Activated T-helper 1 cell treated with anti-CD3 and anti-CD28 coated beads, Interleukin-12 subunit alpha, Interleukin-12 subunit beta, Interleukin-2, Interleukin-4 antibody, amounts not matched to agents 30 ng/mL and 10 ng/mL and 1 ng/mL, durations not matched to agents 14 hours and 24 hours and 36 hours (primary cell): ENCODE measurements at regions of chr12 and their contacts with region 1.

Region 1: DNA sequence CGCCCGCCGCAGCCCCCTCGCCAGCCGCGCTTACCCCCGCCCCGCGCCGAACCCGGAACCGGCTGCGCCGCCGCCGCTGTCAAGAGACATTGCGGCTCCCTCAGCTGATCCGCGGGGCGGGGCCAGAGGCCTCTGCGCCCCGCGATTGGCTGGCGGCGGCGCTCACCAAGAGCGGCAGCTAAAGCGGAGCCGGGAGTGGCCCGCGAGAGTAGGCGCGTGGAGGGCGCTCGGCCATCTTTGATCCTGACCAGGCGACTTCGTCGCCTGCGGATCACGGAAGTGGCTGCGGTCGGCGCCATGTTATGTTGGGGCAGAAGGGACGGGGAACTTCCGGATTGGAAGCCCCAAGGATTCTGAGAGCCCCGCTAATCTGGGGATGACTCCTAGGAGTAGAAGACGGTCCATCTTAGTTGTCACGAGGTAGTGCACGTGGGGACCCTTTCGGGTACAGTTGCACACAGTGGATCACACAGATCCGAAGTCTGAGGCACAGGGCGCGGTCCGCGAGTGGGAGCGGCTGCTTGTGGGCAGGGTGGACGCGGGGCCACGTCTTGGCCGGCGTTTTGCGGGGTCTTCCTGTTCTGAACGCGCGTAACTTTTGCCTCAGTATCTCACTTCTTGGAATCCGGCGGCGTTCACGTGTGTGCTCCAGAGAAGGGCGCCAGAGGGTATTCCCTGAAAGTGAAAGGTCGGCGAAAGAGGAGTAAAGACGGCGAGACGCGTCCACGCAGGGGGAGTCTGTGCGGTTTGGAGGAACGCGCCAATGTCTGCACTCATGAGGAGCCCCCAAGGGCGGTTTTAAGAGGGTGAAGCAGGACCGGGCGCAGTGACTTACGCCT is at the start of gene CHFR:
- DNase-seq: peak; percentile 93
- H3K4me3 Mint-ChIP-seq: peak within 1 kb of the TSS; percentile 99
- H3K27ac Mint-ChIP-seq: peak within 1 kb of the TSS; percentile 100
- H3K4me1 Mint-ChIP-seq: peaks cover 15% of the 10 kb centered on the region
- H3K27me3 Mint-ChIP-seq: peaks cover 2% of the 10 kb centered on the region
- total RNA-seq, gene CHFR: 63.7 and 65.6 TPM in 2 replicates

Region 2: GRCh38 chr12:132189378-132190011 is 698.2 kb before region 1 on chr12:
- intact Hi-C with region 1: loop called (anchors 10 kb)
- DNase-seq: peak; percentile 95
- H3K4me3 Mint-ChIP-seq: peak overlapping the region; percentile 93
- H3K27ac Mint-ChIP-seq: peak overlapping the region; percentile 87
- H3K4me1 Mint-ChIP-seq: peaks cover 31% of the 10 kb centered on the region
- H3K27me3 Mint-ChIP-seq: peaks cover 5% of the 10 kb centered on the region

Region 3: GRCh38 chr12:132710422-132711168 is 177.1 kb before region 1 on chr12 and contains the start of gene PGAM5:
- intact Hi-C with region 1: loop called (anchors 1 kb)
- DNase-seq: peak; percentile 94
- H3K4me3 Mint-ChIP-seq: peak within 1 kb of the TSS; percentile 92
- H3K27ac Mint-ChIP-seq: peak within 1 kb of the TSS; percentile 96
- H3K4me1 Mint-ChIP-seq: peaks cover 15% of the 10 kb centered on the region
- H3K27me3 Mint-ChIP-seq: no peaks in the 10 kb centered on the region
- total RNA-seq, gene PGAM5: 107 and 111 TPM in 2 replicates

Region 4: DNA sequence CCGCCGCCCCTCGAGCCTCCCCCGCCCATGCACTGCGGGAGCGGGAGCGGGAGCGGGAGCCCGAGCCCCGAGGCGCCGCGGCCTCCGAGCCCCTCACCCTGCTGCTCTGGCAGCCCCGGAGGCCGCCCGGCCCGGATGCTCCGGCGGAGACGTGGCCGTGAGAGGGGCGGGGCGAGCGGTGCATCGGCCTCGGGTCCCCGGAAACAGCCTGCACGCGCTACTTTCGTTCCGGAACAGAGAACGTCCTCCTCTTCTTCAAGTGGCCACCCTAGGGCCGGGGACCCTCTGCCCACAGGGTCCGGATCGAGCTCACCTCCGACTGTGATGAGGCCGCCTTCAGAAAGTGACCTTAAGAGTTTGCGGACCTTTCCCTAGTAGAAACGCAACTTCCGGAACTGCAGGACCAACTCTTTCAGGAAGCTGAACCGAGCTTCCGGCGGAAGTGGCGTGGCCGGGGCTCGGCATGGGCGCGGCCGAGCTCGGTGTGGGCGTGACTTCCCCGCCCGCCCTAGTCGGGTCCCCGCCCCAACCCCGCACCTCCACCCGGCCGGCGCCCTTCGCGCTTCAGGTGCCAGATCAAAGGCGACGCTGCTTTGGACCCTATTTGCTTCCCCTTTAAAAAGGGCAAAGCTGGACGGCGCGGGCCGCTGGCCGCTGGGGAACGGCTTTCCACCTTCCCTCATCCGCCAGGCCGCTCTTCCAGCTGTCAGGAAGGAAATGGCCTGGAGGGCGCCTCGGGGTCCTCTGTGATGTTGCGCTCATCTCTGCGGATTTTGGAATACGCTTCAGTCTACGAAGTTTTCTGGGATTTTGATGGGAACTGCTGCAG is 58.8 kb before region 1 on chr12 and contains the start of gene GOLGA3:
- intact Hi-C with region 1: loop called (anchors 2 kb)
- DNase-seq: peak; percentile 91
- H3K4me3 Mint-ChIP-seq: peak within 1 kb of the TSS; percentile 99
- H3K27ac Mint-ChIP-seq: peak within 1 kb of the TSS; percentile 100
- H3K4me1 Mint-ChIP-seq: peaks cover 43% of the 10 kb centered on the region
- H3K27me3 Mint-ChIP-seq: peaks cover 2% of the 10 kb centered on the region
- total RNA-seq, gene GOLGA3: 78.7 and 86.9 TPM in 2 replicates

Region 5: DNA sequence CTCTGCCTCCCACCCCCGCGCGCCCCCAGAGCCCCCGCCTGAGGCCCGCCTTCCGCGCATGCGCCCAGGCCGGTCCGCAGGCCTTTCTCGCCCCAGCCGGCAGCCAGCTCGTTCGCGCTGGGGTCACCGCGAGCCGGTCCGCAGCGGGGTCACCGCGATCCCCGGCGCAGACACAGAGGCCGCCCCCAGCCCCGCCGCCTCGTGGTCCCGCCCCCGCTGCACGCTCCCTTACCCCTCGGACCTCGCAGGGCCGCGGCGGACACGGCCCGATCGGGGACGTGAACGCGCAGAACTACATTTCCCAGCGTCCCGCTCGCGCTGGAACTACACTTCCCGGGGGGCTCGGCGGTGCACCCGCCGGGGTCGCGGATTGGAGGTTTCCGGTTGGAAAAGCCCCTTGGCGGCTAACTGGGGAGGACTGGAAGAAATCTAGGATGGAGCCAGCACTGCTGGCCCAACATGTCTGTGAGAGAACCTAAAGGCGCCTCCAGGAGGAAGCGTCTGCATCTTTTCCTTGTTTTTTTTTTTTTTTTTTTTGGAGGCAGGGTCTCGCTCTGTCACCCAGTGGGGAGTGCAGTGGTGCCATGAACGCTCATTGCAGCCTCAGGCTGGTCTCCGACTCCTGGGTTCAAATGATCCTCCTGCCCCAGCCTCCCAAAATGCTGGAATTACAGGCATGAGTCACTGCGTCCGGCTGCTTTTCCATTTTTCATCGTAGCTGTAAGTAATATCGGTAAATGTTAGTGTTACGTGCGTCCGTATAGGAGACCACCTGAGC is 68.5 kb after region 1 on chr12 and contains the start of gene ZNF605:
- intact Hi-C with region 1: loop called (anchors 2 kb)
- DNase-seq: peak; percentile 85
- H3K4me3 Mint-ChIP-seq: peak within 1 kb of the TSS; percentile 98
- H3K27ac Mint-ChIP-seq: peak within 1 kb of the TSS; percentile 94
- H3K4me1 Mint-ChIP-seq: peaks cover 18% of the 10 kb centered on the region
- H3K27me3 Mint-ChIP-seq: no peaks in the 10 kb centered on the region
- total RNA-seq, gene ZNF605: 6.3 and 7.5 TPM in 2 replicates

Region 6: GRCh38 chr12:133080368-133081158 is 192.8 kb after region 1 on chr12 and contains the start of gene ZNF140:
- intact Hi-C with region 1: loop called (anchors 1 kb)
- DNase-seq: peak; percentile 93
- H3K4me3 Mint-ChIP-seq: no peak within 1 kb of the TSS
- H3K27ac Mint-ChIP-seq: peak within 1 kb of the TSS; percentile 84
- H3K4me1 Mint-ChIP-seq: no peaks in the 10 kb centered on the region
- H3K27me3 Mint-ChIP-seq: no peaks in the 10 kb centered on the region
- total RNA-seq, gene ZNF140: 15.0 and 15.1 TPM in 2 replicates

Region 7: DNA sequence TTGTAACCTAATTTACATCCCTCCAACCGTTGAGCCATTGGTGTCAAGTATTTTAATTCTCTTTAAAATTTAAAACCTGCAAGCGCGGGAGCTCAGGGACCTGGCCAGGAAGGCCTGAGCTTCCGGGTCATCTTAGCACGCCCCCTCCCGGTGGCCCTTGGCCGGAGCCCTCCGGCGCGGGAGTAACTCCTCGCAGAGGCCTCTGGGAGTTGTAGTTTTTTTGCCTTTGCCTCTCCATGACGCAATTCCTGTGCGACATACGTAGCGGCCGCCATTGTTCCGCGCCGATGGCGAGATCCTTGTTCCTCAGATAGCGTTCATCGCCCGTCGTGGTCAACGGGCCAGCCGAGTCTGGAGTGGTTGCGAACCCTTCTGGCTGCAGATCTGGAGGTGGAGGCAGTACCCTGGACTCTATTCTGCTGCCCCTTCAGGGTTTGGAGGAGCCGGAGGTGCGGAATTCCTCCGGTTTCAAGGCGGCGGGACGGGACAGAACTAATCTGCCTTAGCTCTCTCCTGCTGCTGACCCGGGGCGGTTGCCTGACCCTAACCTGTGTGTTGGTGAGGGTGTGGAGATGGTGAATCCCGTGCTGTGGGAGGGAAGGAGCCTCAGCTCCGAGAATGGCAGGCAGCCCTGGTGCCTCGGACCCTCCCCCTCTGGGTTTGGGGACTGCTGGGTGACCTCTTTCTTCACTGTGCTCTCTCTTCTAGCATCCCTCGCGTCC is 293.7 kb after region 1 on chr12 and contains the start of gene ZNF268:
- intact Hi-C with region 1: loop called (anchors 1 kb)
- DNase-seq: peak; percentile 87
- H3K4me3 Mint-ChIP-seq: peak within 1 kb of the TSS; percentile 97
- H3K27ac Mint-ChIP-seq: peak within 1 kb of the TSS; percentile 95
- H3K4me1 Mint-ChIP-seq: peaks cover 20% of the 10 kb centered on the region
- H3K27me3 Mint-ChIP-seq: no peaks in the 10 kb centered on the region
- total RNA-seq, gene ZNF268: 16.7 and 21.5 TPM in 2 replicates